Left cardiac atrium (tissue), 4 donors: ENCODE measurements at regions of chr15 and their contacts with region 1.

Region 1: DNA sequence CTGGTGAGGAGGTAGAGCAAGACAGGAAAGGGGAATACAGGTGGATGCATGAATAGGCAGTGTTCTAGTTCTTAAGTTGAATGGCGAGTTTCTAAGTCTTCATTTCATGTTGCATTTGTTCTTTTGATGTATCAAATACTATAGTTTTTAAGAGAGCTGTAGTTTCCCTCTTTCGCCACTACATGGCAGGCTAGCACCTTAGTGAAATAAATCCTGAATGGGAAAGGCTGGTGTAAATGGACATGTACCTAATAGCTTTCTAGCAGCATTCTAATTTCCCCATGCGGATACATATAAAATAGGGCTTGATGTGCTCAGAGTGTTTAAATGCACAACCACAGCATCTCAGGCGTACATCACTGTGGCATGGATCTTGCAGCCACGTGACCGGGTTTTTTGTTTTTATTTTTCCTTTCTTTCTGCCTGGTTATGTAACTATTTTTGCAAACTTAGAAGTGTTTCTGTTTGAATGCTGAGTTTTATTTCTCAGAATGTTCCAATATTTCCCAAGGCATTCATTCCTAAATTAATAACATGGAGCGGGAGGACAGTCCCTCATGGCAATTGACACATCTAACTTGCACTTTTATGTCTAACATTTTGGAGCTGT is 23.5 kb upstream of the CLN6 start:
- DNase-seq: peak; percentile 24
- ATAC-seq: peak in 1 of 2 donors; percentile 19

Region 2: GRCh38 chr15:68097029-68097428 is 156.0 kb before region 1 on chr15:
- intact Hi-C with region 1: no loop called
- DNase-seq: no peak
- ATAC-seq: no peak

Region 3: DNA sequence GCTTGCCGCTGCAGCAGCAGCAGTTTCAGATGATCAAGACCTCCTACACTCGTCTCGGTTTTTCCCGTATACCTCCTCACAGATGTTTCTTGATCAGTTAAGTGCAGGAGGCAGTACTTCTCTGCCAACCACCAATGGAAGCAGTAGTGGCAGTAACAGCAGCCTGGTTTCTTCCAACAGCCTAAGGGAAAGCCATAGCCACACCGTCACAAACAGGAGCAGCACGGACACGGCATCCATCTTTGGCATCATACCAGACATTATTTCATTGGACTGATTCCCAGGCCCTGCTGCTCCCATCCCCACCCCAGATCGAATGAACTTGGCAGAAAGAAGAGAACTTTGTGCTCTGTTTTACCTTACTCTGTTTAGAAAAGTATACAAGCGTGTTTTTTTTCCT is 65.5 kb before region 1 on chr15:
- intact Hi-C with region 1: no loop called
- DNase-seq: no peak
- ATAC-seq: peak; percentile 91 to 92

Region 4: DNA sequence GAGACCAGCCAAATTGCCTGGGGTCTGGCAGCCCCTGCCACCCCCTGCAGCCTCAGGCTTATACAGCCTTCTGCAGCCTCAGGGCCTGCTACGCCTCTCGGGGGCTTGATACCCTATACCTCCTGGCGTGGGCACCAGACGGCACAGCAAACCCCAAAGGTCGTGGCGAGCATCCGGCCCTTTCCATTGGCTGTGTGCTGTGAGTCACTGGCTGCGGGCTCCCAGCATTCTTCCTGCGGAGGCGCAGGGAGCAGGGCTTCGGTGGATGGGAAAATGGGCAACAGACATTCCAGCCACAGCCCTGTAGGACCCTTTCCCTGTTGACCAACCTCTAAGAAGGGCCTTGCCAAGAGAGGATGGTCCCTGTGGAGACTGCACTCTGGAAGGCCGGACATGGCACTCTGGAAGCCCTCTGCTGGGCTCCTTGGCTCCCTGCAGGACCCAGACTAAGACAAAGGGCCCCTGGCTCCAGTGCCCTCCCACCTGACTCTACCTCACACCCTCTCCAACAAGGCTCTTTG is 119.3 kb after region 1 on chr15:
- intact Hi-C with region 1: no loop called
- DNase-seq: no peak
- ATAC-seq: peak; percentile 31 to 71

Region 5: DNA sequence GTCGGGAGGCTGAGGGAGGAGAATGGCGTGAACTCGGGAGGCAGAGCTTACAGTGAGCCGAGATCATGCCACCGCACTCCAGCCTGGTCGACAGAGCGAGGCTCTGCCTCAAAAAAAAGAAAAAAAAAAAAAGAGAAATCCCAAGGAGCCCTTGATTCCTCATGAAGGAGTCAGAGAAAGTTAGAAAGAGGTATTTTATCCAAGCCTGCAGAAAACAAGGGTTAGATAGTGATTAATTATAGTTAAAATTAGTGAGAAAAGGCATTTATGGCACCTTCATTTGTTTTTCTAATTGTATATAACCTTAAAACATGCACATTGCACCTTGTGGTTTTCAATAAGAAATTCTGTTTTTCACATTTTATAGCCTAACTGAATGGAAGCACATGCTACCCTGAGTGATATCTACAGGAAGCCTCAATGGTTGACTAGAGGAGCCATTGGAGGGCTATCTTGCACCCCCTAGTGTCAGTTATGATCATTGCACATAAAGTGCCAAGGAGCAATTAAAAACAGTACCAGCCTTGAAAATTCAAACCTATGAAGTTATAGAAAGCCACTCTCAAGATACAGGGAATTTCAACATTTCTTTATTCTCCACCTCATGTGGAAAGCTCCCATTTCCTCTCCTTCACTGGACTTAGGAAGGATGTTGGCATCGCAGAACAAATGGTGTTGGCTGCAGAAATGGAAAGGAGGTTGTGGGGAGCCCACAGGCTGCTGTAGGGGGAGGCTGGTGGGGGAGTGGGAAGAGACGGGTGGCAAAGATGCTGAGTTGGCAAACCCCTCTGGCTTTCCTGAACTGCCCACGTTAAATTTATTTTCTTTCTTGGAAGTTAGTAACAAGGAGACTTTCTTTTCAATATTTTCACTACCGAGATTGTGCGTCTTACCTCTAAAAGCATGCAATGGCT is 130.4 kb after region 1 on chr15:
- intact Hi-C with region 1: loop called (anchors 5 kb)
- DNase-seq: no peak
- ATAC-seq: peak; percentile 32 to 41

Region 6: DNA sequence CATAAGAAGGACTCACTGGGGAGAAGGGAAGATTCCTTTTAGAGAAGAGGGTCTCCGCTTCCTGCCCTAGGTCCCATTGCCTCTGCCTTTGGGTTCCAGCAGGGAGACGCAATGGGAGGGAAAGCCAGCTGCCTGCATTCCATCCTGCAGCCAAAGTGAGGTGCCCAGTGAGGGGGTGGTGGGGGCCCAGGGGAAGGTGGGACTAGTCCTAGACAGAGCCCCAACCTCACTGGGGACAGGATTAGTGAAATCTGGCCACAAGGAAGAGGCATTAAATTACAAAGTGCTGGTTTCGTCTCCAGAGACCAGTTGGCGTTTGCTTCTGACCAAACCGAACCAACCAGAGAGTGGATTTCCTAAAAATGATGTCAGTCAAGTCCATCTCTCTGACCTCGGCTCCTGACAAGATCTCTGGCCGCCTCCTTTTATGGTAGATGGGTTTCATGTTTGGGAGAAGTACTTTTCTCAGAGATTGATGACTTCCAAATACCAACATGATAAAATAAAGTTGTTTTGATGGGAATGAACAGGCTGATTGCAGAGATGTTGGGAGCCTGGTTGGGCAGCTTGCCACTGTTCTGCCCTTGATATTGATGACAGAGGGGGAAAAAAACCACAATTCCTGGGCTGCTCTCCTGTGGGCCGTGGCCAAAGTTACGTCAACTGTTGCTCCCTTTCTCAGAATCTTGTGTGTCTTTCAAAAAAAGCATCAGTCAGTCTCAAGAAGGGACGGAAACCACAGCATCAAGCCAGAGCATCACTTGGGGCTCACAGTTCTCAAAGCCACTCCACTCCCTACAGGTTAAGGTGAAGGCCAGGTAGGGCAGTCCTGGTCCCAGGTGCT is 154.2 kb after region 1 on chr15:
- intact Hi-C with region 1: no loop called
- DNase-seq: no peak
- ATAC-seq: peak in 1 of 2 donors; percentile 7